ENCODE measurements at regions of chr4 and their contacts with region 1.

Region 1: GRCh38 chr4:184745831-184746795 is 12.2 kb upstream of the CENPU start:
- DNase-seq: peak; percentile 68 to 86 (median 77)
- ATAC-seq: peak; percentile 81 to 90
- H3K4me3 ChIP-seq: no peak overlapping the region
- H3K27ac ChIP-seq: peak overlapping the region; percentile 84
- H3K4me1 ChIP-seq: peaks cover 12% of the 10 kb centered on the region
- H3K27me3 ChIP-seq: no peaks in the 10 kb centered on the region

Region 2: GRCh38 chr4:184588893-184589292 is 157.2 kb before region 1 on chr4:
- intact Hi-C with region 1: no loop called
- DNase-seq: no peak
- ATAC-seq: no peak
- H3K4me3 ChIP-seq: no peak overlapping the region
- H3K27ac ChIP-seq: no peak overlapping the region
- H3K4me1 ChIP-seq: no peaks in the 10 kb centered on the region
- H3K27me3 ChIP-seq: no peaks in the 10 kb centered on the region

Region 3: GRCh38 chr4:184812651-184813181 is 66.6 kb after region 1 on chr4:
- intact Hi-C with region 1: loop called in 1 of 4 experiments (anchors 5 kb)
- DNase-seq: no peak
- ATAC-seq: peak; percentile 1 to 19
- H3K4me3 ChIP-seq: no peak overlapping the region
- H3K27ac ChIP-seq: peak overlapping the region; percentile 76
- H3K4me1 ChIP-seq: peaks cover 17% of the 10 kb centered on the region
- H3K27me3 ChIP-seq: no peaks in the 10 kb centered on the region

Region 4: GRCh38 chr4:184825896-184826690 is 80.0 kb after region 1 on chr4 and contains the start of gene ACSL1:
- intact Hi-C with region 1: loop called in 1 of 4 experiments (anchors 10 kb)
- DNase-seq: peak; percentile 89 to 95 (median 94)
- ATAC-seq: peak; percentile 88 to 92
- H3K4me3 ChIP-seq: peak within 1 kb of the TSS; percentile 75
- H3K27ac ChIP-seq: peak within 1 kb of the TSS; percentile 83
- H3K4me1 ChIP-seq: no peaks in the 10 kb centered on the region
- H3K27me3 ChIP-seq: no peaks in the 10 kb centered on the region
- total RNA-seq, gene ACSL1: 94.6 to 149 (median 106) TPM

Region 5: GRCh38 chr4:184983672-184984356 is 237.7 kb after region 1 on chr4:
- intact Hi-C with region 1: loop called in 3 of 4 experiments (anchors 5 to 10 kb)
- DNase-seq: peak; percentile 56 to 84 (median 83)
- ATAC-seq: peak; percentile 75 to 77
- H3K4me3 ChIP-seq: no peak overlapping the region
- H3K27ac ChIP-seq: no peak overlapping the region
- H3K4me1 ChIP-seq: peaks cover 4% of the 10 kb centered on the region
- H3K27me3 ChIP-seq: no peaks in the 10 kb centered on the region

Region 6: DNA sequence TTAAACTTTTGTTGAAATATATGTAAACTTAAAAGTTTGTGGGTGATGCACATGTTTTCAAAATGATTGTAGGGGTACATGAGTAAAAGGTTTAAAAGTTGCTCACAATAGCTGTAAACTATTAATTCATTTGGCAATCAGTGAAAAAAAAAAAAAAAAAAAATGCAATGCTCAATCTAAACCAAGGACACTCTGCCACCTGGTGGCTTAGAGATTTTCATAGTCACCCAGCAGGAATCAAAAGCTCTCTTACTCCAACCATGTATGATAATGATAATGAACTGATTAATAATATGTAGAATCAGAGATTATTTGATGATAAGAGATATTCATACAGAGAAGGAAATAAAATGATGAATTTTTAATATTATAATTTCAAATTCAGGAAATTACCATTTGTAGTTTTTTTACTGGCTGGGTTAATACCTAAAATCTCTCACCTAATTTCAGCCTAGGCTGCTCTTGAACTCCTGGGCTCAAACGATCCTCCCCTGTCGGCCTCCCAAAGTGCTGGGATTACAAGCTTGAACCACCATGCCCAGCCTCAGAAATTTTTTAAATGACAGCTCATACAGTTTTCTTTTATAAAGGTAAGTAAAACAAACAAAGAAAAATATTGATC is 350.0 kb after region 1 on chr4:
- intact Hi-C with region 1: loop called in 1 of 4 experiments (anchors 10 kb)
- DNase-seq: no peak
- ATAC-seq: no peak
- H3K4me3 ChIP-seq: no peak overlapping the region
- H3K27ac ChIP-seq: no peak overlapping the region
- H3K4me1 ChIP-seq: no peaks in the 10 kb centered on the region
- H3K27me3 ChIP-seq: no peaks in the 10 kb centered on the region

Region 7: DNA sequence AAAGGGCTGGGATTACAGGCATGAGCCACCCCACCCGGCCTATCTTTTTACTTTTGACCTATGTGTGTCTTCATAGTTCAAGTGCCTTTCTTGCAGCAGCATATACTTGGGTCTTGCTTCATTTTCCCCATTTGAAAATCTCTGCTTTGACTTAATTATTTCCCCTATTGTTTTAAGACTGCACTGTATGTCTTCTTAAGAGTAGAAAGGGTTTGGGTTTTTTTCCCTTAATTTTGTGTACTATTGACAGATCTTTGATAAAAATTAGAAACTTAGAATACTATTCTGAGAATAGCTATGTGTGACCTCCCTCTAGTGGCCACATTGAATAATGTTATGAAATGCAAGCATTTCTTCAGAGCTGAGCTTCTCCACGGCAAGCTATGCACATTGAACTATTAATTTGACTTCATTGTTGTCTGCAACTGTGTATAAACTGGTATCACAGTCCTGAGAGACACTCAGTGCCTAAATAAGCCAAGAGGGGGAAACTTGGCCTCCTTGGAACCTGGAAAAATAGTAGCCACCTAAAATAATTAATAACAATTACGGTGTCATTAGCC is 388.3 kb after region 1 on chr4:
- intact Hi-C with region 1: no loop called
- DNase-seq: no peak
- ATAC-seq: peak; percentile 52 to 60
- H3K4me3 ChIP-seq: no peak overlapping the region
- H3K27ac ChIP-seq: no peak overlapping the region
- H3K4me1 ChIP-seq: peaks cover 3% of the 10 kb centered on the region
- H3K27me3 ChIP-seq: no peaks in the 10 kb centered on the region